ENCODE measurements at regions of chr1 and their contacts with region 1.

Region 1: GRCh38 chr1:63691701-63692425 is 82.0 kb upstream of the ROR1 start:
- DNase-seq: peak; percentile 82 to 91
- ATAC-seq: peak; percentile 93 to 94
- H3K4me3 ChIP-seq: no peak overlapping the region
- H3K27ac ChIP-seq: peak overlapping the region; percentile 93 to 95
- H3K4me1 ChIP-seq: peaks cover 53% of the 10 kb centered on the region
- CTCF ChIP-seq: peak; percentile 82
- EP300 ChIP-seq: no peak
- POLR2A ChIP-seq: no peak
- RAD21 ChIP-seq: peak; percentile 90 to 92

Region 2: DNA sequence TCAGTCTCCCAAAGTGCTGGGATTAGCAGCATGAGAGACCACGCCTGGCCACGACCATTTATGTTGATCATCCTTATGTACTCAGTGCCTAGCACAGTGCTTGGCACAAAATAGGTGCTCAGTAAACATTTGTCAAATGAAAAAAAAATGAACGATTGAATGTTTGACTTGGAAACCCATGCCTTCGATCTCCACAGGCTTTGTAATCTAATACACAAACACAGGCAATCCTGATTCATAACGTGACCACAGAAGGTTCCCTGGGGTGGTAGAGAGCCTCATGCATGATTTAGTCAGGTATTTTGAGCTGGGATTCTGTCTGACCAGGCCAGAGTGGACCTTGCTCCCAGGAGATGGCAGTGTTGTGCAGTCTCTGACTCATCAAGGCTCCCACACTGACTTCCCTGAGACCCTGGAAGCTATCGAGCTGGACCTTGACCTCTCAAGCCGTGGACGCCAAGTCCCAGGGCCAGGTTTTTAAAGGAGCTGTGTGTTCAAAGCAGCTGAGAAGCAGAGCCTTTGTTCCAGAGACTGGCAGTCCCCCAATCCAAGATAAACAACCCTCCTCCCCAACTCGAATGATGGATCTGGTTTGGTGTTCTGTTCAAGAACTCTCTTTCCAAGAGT is 17.5 kb before region 1 on chr1:
- CTCF ChIA-PET with region 1: interaction called, 41 read pairs
- POLR2A ChIA-PET with region 1: no interaction called
- DNase-seq: peak; percentile 80 to 84
- ATAC-seq: peak; percentile 99
- H3K4me3 ChIP-seq: no peak overlapping the region
- H3K27ac ChIP-seq: peak overlapping the region; percentile 81 to 86
- H3K4me1 ChIP-seq: peaks cover 17% of the 10 kb centered on the region
- CTCF ChIP-seq: peak; percentile 76
- EP300 ChIP-seq: no peak
- POLR2A ChIP-seq: no peak
- RAD21 ChIP-seq: peak; percentile 91 to 93

Region 3: DNA sequence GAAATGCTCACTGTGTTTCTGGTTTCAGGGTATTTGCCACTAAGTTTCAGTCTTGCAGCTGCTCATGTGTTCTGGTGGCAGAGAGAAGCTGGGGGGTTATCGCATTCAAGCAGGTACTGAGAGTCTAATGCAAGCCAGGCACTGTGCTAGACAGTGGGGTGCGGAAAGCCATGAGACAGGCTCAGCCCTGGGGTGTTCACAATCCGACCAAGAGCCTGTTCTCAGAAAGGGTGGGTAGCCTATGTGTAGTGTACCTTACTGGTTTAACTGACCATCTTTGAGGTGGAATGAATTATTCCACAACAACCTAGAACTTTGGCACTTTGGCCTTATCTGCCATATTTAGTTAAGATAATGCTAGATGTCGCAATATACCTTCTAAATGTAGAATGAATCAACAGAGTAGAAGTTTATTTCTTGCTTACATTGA is 26.7 kb after region 1 on chr1:
- CTCF ChIA-PET with region 1: interaction called, 11 read pairs
- POLR2A ChIA-PET with region 1: no interaction called
- DNase-seq: no peak
- ATAC-seq: no peak
- H3K4me3 ChIP-seq: no peak overlapping the region
- H3K27ac ChIP-seq: peak overlapping the region; percentile 17 to 69; a peak in 3 of 6 replicates
- H3K4me1 ChIP-seq: peaks cover 48% of the 10 kb centered on the region
- CTCF ChIP-seq: no peak
- EP300 ChIP-seq: no peak
- POLR2A ChIP-seq: no peak
- RAD21 ChIP-seq: no peak

Region 4: DNA sequence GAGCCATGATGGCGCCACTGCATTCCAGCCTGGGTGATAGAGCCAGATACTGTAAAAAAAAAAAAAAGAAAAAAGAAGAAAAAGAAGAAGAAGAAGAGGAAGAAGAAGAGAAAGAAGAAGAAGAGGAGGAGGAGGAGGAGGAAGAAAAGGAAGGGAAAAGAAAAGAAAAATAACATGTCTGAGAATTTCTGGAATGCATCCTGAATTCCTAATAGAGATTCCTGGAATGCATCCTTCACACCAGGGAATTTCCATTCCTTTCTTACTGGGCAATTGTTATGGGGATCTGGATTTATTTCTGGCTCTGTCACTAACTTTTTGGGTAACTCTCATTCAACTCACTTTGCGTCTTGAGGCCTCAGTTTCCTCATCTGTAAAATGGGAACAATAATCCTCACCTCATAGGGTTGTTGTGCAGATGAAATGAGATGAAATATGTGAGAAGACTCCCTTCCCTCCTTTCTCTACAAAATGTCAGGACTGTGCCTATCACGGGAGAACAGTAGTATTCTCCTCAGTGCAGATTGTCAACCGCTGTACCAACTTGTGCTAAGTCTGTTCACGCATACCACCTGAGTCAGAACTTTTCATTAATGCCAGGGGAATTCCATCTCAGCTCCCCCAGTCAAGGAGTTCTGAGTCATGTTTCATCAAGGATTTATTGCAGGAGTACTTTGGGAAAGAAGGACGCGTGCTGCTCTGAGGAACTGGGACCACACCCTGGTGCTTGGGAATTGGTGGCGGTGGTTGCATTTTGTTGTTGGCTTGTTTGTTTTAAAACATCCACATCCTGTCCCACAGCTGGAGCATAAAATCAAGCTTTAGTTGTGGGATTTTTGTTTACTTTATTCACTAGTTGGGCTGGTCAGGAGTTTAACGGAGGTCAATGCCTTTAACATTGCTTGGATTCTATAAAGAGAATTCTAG is 39.5 kb after region 1 on chr1:
- CTCF ChIA-PET with region 1: interaction called, 18 read pairs
- POLR2A ChIA-PET with region 1: interaction called, 11 read pairs
- DNase-seq: peak; percentile 76 to 97
- ATAC-seq: peak; percentile 93 to 96
- H3K4me3 ChIP-seq: peak overlapping the region; percentile 14; the same call in 1 of the 3 replicates
- H3K27ac ChIP-seq: peak overlapping the region; percentile 87 to 90
- H3K4me1 ChIP-seq: peaks cover 36% of the 10 kb centered on the region
- CTCF ChIP-seq: no peak
- EP300 ChIP-seq: peak; percentile 77 to 91; a peak in 3 of 5 replicates
- POLR2A ChIP-seq: no peak
- RAD21 ChIP-seq: peak; percentile 28 to 62; a peak in 4 of 5 replicates

Region 5: DNA sequence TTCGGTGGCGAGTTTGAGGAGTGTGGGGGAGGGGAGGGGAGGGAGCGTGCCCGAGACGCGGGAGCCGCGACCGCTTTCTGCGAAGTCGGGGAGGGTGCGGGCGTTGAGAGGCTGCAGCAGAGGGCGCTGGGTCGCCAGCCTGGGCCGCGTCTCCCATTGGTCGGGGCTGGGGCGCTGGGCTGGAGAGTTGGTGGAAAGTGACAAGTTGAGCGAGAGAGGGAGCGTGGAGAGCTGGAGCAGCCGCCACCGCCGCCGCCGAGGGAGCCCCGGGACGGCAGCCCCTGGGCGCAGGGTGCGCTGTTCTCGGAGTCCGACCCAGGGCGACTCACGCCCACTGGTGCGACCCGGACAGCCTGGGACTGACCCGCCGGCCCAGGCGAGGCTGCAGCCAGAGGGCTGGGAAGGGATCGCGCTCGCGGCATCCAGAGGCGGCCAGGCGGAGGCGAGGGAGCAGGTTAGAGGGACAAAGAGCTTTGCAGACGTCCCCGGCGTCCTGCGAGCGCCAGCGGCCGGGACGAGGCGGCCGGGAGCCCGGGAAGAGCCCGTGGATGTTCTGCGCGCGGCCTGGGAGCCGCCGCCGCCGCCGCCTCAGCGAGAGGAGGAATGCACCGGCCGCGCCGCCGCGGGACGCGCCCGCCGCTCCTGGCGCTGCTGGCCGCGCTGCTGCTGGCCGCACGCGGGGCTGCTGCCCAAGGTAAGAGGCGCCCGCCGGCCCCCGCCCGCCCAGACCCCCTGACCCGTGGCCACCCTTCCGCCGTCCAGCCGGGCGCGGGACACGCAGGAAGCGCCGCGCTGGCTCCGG is 82.2 kb after region 1 on chr1 and contains the start of gene ROR1:
- CTCF ChIA-PET with region 1: interaction called, 8 read pairs
- POLR2A ChIA-PET with region 1: interaction called, 12 read pairs
- DNase-seq: peak; percentile 81 to 89
- ATAC-seq: peak; percentile 96 to 98
- H3K4me3 ChIP-seq: peak within 1 kb of the TSS; percentile 83
- H3K27ac ChIP-seq: peak within 1 kb of the TSS; percentile 95 to 96
- H3K4me1 ChIP-seq: peaks cover 54% of the 10 kb centered on the region
- CTCF ChIP-seq: peak; percentile 51
- EP300 ChIP-seq: no peak
- POLR2A ChIP-seq: peak; percentile 35; the same call in 1 of the 2 replicates
- RAD21 ChIP-seq: peak; percentile 61 to 78
- polyA plus RNA-seq, gene ROR1: 19.0 and 29.3 TPM in 2 replicates

Region 6: DNA sequence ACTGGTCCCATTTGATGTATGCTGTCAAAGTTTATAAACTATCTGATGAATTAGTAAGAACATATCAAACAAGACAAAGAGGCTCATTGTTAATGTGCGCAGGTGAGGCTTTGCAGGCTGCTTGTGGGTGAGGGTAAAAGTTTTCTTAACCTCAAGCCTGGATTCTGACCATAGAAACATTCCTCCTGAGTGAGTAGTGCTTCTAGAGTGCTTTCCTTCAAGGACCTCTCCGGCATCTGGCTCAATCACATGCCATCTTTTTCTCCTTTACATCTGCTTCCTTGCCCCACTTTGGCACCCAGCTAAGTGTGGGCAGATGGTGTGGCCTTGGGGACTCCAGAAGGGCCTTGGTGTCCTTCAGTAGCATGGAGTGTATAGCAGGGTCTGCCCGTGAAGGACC is 186.0 kb after region 1 on chr1:
- CTCF ChIA-PET with region 1: no interaction called
- POLR2A ChIA-PET with region 1: no interaction called
- DNase-seq: no peak
- ATAC-seq: peak in 1 of 2 experiments; percentile 37; a peak in 3 of 6 replicates
- H3K4me3 ChIP-seq: no peak overlapping the region
- H3K27ac ChIP-seq: peak overlapping the region in 1 of 2 experiments; percentile 33; a peak in 1 of 6 replicates
- H3K4me1 ChIP-seq: peaks cover 53% of the 10 kb centered on the region
- CTCF ChIP-seq: no peak
- EP300 ChIP-seq: no peak
- POLR2A ChIP-seq: no peak
- RAD21 ChIP-seq: no peak

Region 7: GRCh38 chr1:63915121-63915520 is 223.3 kb after region 1 on chr1:
- CTCF ChIA-PET with region 1: interaction called, 11 read pairs
- POLR2A ChIA-PET with region 1: no interaction called
- DNase-seq: peak in 1 of 2 experiments; percentile 41
- ATAC-seq: peak in 1 of 2 experiments; percentile 69; a peak in 3 of 6 replicates
- H3K4me3 ChIP-seq: no peak overlapping the region
- H3K27ac ChIP-seq: peak overlapping the region; percentile 30 to 51; a peak in 4 of 6 replicates
- H3K4me1 ChIP-seq: peaks cover 85% of the 10 kb centered on the region
- CTCF ChIP-seq: no peak
- EP300 ChIP-seq: no peak
- POLR2A ChIP-seq: no peak
- RAD21 ChIP-seq: peak; percentile 36 to 48; a peak in 3 of 5 replicates

Region 8: DNA sequence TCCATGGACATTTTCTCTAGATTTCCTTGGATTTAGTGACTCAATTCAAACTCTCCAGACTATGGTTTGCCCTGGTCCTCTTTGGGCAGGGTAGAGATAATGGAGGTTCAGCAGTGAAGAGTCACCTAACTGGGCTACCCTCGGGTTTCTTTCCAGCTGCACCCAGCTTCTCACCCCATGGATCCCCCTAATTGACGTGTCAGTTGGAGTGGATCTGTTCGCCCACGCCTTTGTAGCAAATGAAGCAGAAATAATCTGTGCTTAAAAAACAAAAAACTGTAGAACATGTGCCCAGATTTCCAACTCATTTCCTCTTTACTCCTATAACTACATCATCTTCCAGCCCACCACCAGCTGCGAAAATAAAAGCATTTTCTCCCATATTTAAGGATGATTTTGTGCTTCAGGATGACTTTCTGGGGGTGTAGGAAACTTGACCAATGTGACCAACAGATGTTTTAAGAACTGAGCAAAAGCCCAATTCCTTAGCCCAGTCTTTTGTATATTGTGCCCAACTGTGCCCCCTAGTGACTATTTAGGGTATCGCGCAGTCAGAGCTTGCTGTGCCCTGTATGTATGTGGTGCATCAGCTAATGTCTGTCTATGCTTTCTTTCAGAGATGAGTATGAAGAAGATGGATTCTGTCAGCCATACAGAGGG is 445.0 kb after region 1 on chr1:
- CTCF ChIA-PET with region 1: interaction called, 14 read pairs
- POLR2A ChIA-PET with region 1: interaction called, 3 read pairs
- DNase-seq: peak; percentile 28 to 64
- ATAC-seq: peak; percentile 74 to 86; a peak in 4 of 6 replicates
- H3K4me3 ChIP-seq: no peak overlapping the region
- H3K27ac ChIP-seq: peak overlapping the region; percentile 53 to 63; a peak in 5 of 6 replicates
- H3K4me1 ChIP-seq: peaks cover 38% of the 10 kb centered on the region
- CTCF ChIP-seq: peak; percentile 72
- EP300 ChIP-seq: no peak
- POLR2A ChIP-seq: no peak
- RAD21 ChIP-seq: peak; percentile 77 to 81